Activated T-helper 2 cell treated with anti-CD3 and anti-CD28 coated beads, Interferon-gamma antibody, Interleukin-2, Interleukin-4, amounts not matched to agents 10 μg/mL and 5 μg/mL and 100 μg/mL, durations not matched to agents 14 hours and 24 hours and 36 hours (primary cell): ENCODE measurements at regions of chr10 and their contacts with region 1.

Region 1: DNA sequence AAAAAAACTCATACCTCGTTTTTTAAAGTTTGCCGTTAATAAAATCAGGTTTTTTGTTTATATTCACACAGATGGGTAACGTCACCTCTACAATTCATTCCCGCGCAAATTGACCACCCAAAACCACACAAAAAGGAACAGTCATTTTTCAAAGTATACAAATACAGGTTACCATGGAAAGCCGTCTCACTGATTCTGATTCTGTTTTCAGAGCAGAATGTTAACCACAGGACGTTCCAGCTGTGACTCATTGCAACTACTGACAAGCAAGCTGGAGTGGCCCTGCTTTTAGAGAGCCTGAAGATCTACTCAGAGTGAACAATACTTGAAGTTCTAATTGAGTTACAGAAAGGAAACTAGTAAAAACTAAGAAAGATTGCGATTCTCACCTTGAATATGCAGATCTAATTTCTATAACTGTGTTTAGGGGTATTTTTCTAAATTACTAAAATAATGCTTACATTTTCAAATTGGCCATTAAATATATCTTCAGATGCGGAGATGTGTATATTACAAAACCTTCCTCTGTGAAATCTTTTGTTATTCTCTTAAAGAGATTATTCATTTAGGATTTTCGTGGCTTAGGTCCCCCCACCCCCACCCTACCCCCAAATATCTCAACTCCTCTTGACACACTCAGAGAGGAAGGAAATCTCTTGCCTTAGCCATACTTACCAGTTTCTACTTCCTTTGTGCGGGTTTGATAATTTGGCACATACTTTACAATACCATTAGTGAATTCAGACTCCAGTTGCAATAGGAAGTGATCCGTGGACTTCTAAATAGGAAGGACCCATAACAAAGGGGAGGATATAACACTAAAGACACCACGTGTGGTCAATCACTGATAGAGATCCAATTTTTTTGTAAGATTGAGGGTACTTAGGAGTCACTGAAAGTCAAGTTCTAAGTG is 106.0 kb downstream of the CUBN start:
- DNase-seq: peak; percentile 78
- H3K4me3 Mint-ChIP-seq: peak overlapping the region; percentile 53
- H3K27ac Mint-ChIP-seq: peak overlapping the region; percentile 96
- H3K4me1 Mint-ChIP-seq: peaks cover 50% of the 10 kb centered on the region
- H3K27me3 Mint-ChIP-seq: peaks cover 22% of the 10 kb centered on the region

Region 2: DNA sequence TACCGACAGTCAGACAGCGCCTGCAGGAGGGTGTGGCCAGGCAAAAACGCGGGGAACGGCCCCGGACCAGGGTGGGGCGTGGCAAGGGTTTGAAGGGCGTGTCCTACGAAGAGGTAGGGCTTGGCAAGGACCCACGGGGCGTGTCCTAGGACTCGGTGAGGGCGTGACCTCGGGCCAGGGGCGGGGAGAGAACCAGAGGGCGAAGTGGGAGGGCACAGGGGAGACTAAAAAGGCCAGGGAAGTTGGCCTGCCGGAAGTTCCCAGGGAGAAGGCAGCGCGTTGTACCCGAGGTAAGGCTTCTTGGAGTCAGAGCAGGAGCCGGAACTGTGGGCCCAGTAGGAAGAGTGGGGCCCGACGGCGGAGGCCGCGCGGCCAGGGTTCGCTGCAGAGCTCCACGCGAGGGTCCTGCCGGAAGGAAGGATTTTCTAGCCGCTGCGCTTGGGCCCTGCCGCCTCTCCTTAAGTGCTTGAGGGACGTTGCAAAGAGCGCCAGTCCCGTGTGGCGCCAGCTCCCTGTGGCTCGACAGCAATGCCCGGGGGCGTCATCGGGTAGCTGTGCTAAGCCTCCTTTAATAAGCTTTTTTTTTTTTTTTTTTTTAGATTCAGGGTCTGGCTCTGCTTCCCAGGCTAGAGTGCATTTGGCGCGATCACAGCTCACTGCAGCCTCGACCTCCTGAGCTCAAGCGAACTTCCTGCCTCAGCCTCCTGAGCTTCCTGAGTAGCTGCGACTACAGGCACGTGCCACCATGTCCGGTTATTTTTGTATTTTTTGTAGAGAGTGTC is 586.7 kb before region 1 on chr10 and contains the start of gene PTER:
- intact Hi-C with region 1: loop called (anchors 10 kb)
- DNase-seq: peak; percentile 97
- H3K4me3 Mint-ChIP-seq: peak within 1 kb of the TSS; percentile 93
- H3K27ac Mint-ChIP-seq: peak within 1 kb of the TSS; percentile 93
- H3K4me1 Mint-ChIP-seq: peaks cover 36% of the 10 kb centered on the region
- H3K27me3 Mint-ChIP-seq: peaks cover 11% of the 10 kb centered on the region
- total RNA-seq, gene PTER: 18.9 and 19.9 TPM in 2 replicates

Region 3: GRCh38 chr10:16817125-16818019 is 206.3 kb before region 1 on chr10 and contains the start of gene RSU1:
- intact Hi-C with region 1: loop called (anchors 1 kb)
- DNase-seq: peak; percentile 100
- H3K4me3 Mint-ChIP-seq: peak within 1 kb of the TSS; percentile 93
- H3K27ac Mint-ChIP-seq: peak within 1 kb of the TSS; percentile 79
- H3K4me1 Mint-ChIP-seq: peaks cover 27% of the 10 kb centered on the region
- H3K27me3 Mint-ChIP-seq: peaks cover 10% of the 10 kb centered on the region
- total RNA-seq, gene RSU1: 49.1 and 54.0 TPM in 2 replicates

Region 4: DNA sequence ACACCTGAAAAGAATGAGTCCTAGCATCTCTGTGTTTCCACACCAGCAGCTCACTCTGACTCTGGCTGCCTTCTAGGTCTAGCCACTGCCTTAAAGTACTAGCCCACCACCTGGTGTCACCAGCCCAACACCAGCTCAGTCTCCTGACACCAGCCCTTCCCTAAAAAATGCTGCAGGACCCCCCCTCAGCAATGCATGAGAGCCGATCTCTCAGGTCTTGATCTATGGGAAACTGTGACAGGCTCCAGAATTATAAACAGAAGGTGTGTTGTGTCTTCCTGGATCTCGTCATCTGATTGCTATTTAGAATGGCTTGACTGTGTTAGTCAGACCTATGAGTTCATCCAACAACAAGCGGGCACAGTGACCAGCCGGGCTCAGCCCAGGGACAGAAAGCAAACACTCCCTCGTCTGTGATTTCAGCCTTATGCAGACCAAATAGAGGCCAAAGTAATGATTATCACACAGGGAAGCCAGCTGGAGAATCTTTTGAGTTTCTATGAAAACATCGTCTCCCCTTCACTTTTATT is 39.4 kb after region 1 on chr10:
- intact Hi-C with region 1: loop called (anchors 2 kb)
- DNase-seq: no peak
- H3K4me3 Mint-ChIP-seq: no peak overlapping the region
- H3K27ac Mint-ChIP-seq: no peak overlapping the region
- H3K4me1 Mint-ChIP-seq: peaks cover 36% of the 10 kb centered on the region
- H3K27me3 Mint-ChIP-seq: peaks cover 17% of the 10 kb centered on the region

Region 5: DNA sequence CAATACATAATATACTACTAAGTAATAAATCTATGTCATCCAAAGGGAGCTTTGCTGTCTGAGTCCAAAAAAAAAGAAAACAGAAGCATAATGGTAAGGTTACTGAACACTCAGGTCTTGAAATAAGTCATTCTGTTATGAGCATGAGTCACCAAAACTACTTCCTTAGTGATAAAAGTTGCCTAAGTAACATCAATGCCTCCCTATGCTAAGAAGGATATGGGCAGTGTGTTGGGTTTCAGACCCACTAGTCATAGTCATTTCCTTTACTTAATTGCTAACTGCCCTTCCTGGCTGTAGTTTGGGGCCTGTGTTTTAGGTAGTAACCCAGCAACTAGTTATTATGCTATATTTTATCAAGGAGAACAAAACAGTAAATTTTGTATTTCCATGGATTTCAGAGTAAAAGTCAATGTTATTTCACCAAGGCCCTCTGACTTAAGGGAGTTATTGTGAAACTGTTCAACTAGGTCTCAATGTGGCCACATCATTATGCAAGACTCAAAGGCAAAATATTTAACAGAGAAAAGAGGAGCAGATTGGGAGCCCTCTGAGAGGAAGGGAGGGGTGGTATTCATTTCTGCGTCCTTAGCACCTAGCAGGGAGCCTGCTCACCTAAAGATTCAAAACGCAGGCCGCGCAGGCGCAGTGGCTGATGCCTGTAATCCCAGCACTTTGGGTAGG is 192.7 kb after region 1 on chr10:
- intact Hi-C with region 1: loop called (anchors 1 kb)
- DNase-seq: peak; percentile 43
- H3K4me3 Mint-ChIP-seq: no peak overlapping the region
- H3K27ac Mint-ChIP-seq: peak overlapping the region; percentile 94
- H3K4me1 Mint-ChIP-seq: peaks cover 43% of the 10 kb centered on the region
- H3K27me3 Mint-ChIP-seq: no peaks in the 10 kb centered on the region

Region 6: GRCh38 chr10:17607603-17608332 is 584.1 kb after region 1 on chr10:
- intact Hi-C with region 1: no loop called
- DNase-seq: no peak
- H3K4me3 Mint-ChIP-seq: no peak overlapping the region
- H3K27ac Mint-ChIP-seq: no peak overlapping the region
- H3K4me1 Mint-ChIP-seq: peaks cover 2% of the 10 kb centered on the region
- H3K27me3 Mint-ChIP-seq: peaks cover 5% of the 10 kb centered on the region